Endothelial cell of umbilical vein (primary cell): ENCODE measurements at regions of chr10 and their contacts with region 1.

Region 1: GRCh38 chr10:72048450-72049124 is 39.8 kb downstream of the SPOCK2 start:
- DNase-seq: peak; percentile 94
- H3K4me3 ChIP-seq: no peak overlapping the region
- H3K27ac ChIP-seq: no peak overlapping the region
- H3K4me1 ChIP-seq: no peaks in the 10 kb centered on the region
- H3K27me3 ChIP-seq: no peaks in the 10 kb centered on the region
- CTCF ChIP-seq: peak; percentile 96 to 99
- POLR2A ChIP-seq: no peak

Region 2: GRCh38 chr10:71835671-71836595 is 212.7 kb before region 1 on chr10:
- CTCF ChIA-PET with region 1: interaction called, 11 read pairs
- POLR2A ChIA-PET with region 1: no interaction called
- dilution Hi-C with region 1: no loop called
- intact Hi-C with region 1: no loop called
- DNase-seq: peak; percentile 88
- H3K4me3 ChIP-seq: no peak overlapping the region
- H3K27ac ChIP-seq: peak overlapping the region; percentile 39
- H3K4me1 ChIP-seq: peaks cover 30% of the 10 kb centered on the region
- H3K27me3 ChIP-seq: no peaks in the 10 kb centered on the region
- CTCF ChIP-seq: no peak
- POLR2A ChIP-seq: no peak

Region 3: GRCh38 chr10:71963756-71964668 is 84.6 kb before region 1 on chr10 and contains the start of gene CHST3:
- CTCF ChIA-PET with region 1: interaction called, 17 read pairs
- POLR2A ChIA-PET with region 1: interaction called, 3 read pairs
- dilution Hi-C with region 1: no loop called
- intact Hi-C with region 1: no loop called
- DNase-seq: peak; percentile 62
- H3K4me3 ChIP-seq: peak within 1 kb of the TSS; percentile 21 to 57 (median 55)
- H3K27ac ChIP-seq: peak within 1 kb of the TSS; percentile 60
- H3K4me1 ChIP-seq: peaks cover 18% of the 10 kb centered on the region
- H3K27me3 ChIP-seq: no peaks in the 10 kb centered on the region
- CTCF ChIP-seq: no peak
- POLR2A ChIP-seq: peak; percentile 18
- total RNA-seq, gene CHST3: 10.0 and 11.5 TPM in 2 replicates

Region 4: DNA sequence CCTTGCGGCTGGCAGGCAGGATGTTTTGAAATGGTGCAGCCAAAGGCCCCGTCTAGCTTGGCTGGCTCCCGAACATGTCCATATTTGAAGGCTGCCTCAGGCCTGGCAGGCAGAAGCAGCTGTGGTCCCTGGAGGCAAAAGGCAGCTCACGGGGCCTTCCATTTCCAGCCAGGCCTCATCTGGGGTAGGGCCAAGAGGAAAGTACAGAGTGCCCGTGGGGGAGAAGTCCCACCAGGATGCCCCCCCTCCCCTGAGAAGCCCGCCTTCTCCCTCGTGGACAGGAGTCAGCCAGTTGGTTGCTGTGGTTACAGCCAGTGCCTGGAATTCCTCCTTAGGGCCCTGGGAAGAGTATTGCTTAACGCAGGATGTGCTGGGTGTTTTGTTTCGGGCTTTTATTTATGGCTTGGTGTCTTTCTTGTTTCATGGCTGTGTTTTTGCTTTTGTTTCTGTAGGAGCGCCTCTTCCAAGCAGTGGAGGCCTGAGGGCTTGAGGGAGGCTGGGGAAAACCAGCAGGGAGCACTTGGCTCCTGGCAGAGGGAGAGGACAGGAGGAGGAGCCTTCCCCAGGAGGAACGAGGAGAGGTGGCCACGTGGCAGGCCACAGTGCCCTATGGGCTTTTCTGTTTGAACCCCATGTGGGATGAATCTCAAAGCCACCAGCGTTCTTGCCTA is 39.0 kb before region 1 on chr10:
- CTCF ChIA-PET with region 1: interaction called, 11 read pairs
- POLR2A ChIA-PET with region 1: interaction called, 3 read pairs
- dilution Hi-C with region 1: no loop called
- intact Hi-C with region 1: no loop called
- DNase-seq: peak; percentile 94
- H3K4me3 ChIP-seq: no peak overlapping the region
- H3K27ac ChIP-seq: peak overlapping the region; percentile 52
- H3K4me1 ChIP-seq: peaks cover 17% of the 10 kb centered on the region
- H3K27me3 ChIP-seq: no peaks in the 10 kb centered on the region
- CTCF ChIP-seq: no peak
- POLR2A ChIP-seq: no peak

Region 5: GRCh38 chr10:72061491-72061890 is 12.9 kb after region 1 on chr10:
- CTCF ChIA-PET with region 1: interaction called, 54 read pairs
- POLR2A ChIA-PET with region 1: no interaction called
- dilution Hi-C with region 1: no loop called
- intact Hi-C with region 1: no loop called
- DNase-seq: no peak
- H3K4me3 ChIP-seq: no peak overlapping the region
- H3K27ac ChIP-seq: no peak overlapping the region
- H3K4me1 ChIP-seq: peaks cover 10% of the 10 kb centered on the region
- H3K27me3 ChIP-seq: no peaks in the 10 kb centered on the region
- CTCF ChIP-seq: peak in 1 of 2 donors; percentile 29
- POLR2A ChIP-seq: no peak

Region 6: DNA sequence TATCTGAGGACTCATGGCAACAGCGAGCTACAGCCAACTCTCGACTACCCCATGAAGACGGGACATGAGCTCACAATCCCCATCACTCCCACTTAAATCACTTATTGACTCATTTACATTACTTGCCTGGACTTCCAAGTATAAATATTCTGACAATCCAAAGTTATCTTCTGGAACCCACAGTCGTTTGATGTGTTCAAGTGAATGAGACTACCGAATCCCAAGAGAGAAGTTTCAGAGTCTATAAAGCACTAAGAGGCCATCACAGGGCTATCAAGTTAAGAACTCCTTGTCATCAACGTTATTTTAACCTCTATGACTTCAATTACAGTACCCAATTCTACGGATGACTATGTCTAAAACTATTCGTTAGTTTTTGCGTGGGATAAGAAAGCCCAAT is 155.7 kb after region 1 on chr10:
- CTCF ChIA-PET with region 1: no interaction called
- POLR2A ChIA-PET with region 1: no interaction called
- dilution Hi-C with region 1: no loop called
- intact Hi-C with region 1: no loop called
- DNase-seq: no peak
- H3K4me3 ChIP-seq: no peak overlapping the region
- H3K27ac ChIP-seq: no peak overlapping the region
- H3K4me1 ChIP-seq: no peaks in the 10 kb centered on the region
- H3K27me3 ChIP-seq: no peaks in the 10 kb centered on the region
- CTCF ChIP-seq: no peak
- POLR2A ChIP-seq: no peak

Region 7: DNA sequence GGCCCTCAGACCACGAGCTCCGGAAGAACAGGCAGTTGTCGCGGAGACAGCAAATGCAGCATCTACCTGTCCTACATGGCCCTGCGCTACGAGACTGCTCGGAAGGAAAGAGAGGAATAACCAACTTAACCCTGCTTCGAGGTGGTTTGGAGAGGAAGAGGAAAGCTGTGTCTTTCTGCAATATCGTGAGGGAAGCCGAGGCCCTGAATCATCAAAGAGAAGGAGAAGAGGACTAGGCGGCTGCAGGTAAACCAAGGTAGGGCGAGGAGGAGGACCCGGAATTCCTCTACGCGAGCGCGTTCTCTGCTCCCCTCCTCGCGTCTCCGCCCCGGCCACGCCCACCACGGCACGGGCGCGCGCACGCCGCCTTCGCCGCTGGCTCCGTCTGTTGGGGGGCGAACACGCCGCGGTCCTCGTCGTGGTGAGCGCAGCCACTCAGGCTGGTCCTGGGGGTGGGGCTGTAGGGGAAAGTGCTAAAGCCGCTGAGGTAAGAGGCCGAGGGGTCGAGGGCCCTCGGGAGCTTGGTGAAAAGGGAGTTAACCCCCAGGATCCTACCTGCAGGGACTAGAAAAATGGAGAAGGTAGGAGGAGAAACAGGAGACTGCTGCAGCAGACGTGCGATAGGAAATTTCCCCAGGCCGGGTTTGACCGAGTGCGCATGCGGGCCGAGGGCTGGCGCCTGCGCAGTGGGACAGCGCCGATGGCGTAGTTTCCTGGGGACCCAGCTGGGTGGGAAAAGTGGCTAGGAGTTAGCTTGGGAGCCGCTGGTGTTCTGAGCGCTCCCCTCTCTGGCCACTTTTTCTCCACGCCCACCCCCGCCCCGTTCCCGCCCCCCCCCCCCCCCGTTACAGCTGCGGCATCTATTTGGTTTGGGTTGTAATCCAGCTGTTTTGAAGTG is 167.3 kb after region 1 on chr10 and contains the starts of genes ANAPC16 and ASCC1:
- CTCF ChIA-PET with region 1: interaction called, 55 read pairs
- POLR2A ChIA-PET with region 1: no interaction called
- dilution Hi-C with region 1: no loop called
- intact Hi-C with region 1: no loop called
- DNase-seq: peak; percentile 95
- H3K4me3 ChIP-seq: peak within 1 kb of the TSS; percentile 72 to 94 (median 84)
- H3K27ac ChIP-seq: peak within 1 kb of the TSS; percentile 85
- H3K4me1 ChIP-seq: peaks cover 4% of the 10 kb centered on the region
- H3K27me3 ChIP-seq: no peaks in the 10 kb centered on the region
- CTCF ChIP-seq: no peak
- POLR2A ChIP-seq: peak; percentile 94
- total RNA-seq, gene ANAPC16: 44.2 and 44.4 TPM in 2 replicates
- total RNA-seq, gene ASCC1: 24.9 and 28.2 TPM in 2 replicates

Region 8: GRCh38 chr10:72337020-72337629 is 288.5 kb after region 1 on chr10:
- CTCF ChIA-PET with region 1: interaction called, 38 read pairs
- POLR2A ChIA-PET with region 1: no interaction called
- dilution Hi-C with region 1: no loop called
- intact Hi-C with region 1: loop called (anchors 1 kb)
- DNase-seq: peak; percentile 72
- H3K4me3 ChIP-seq: no peak overlapping the region
- H3K27ac ChIP-seq: peak overlapping the region; percentile 97
- H3K4me1 ChIP-seq: peaks cover 50% of the 10 kb centered on the region
- H3K27me3 ChIP-seq: no peaks in the 10 kb centered on the region
- CTCF ChIP-seq: peak; percentile 97 to 98
- POLR2A ChIP-seq: no peak